GM12878 (cell line): ENCODE measurements at regions of chr7 and their contacts with region 1.

Region 1: GRCh38 chr7:23597094-23598091 is at the start of gene CCDC126:
- DNase-seq: peak; percentile 57
- ATAC-seq: peak; percentile 77
- H3K4me3 ChIP-seq: peak within 1 kb of the TSS; percentile 76
- H3K27ac ChIP-seq: peak within 1 kb of the TSS; percentile 92
- H3K4me1 ChIP-seq: peaks cover 32% of the 10 kb centered on the region
- H3K27me3 ChIP-seq: no peaks in the 10 kb centered on the region
- CTCF ChIP-seq: no peak
- EP300 ChIP-seq: no peak
- POLR2A ChIP-seq: peak; percentile 74
- RAD21 ChIP-seq: no peak
- polyA plus RNA-seq, gene CCDC126: 34.3 to 49.9 TPM

Region 2: DNA sequence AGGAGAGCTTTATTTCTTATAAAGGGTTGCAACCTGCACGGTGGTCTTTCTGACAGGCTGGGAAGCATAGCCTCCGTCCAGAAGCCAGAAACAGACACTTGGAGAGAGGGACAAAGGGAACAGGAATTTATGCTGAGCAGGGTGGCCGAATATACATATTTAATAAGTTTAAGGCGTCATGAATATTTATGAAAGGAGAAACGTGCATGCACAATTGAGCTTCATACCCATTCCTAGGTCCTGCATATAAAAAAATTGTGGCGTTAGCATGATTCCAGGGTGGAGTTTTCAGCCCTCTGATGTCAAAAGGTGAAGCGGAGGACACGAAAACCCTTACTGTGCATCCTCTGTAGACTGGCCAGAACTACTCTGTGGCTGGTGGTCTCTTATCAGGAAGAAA is 10.5 kb after region 1 on chr7:
- CTCF ChIA-PET with region 1: interaction called, 3 read pairs
- POLR2A ChIA-PET with region 1: interaction called, 4 read pairs
- RAD21 ChIA-PET with region 1: interaction called, 3 read pairs
- SMC1A ChIA-PET with region 1: interaction called, 10 read pairs
- in situ Hi-C with region 1: no loop called
- intact Hi-C with region 1: no loop called
- DNase-seq: no peak
- ATAC-seq: no peak
- H3K4me3 ChIP-seq: no peak overlapping the region
- H3K27ac ChIP-seq: no peak overlapping the region
- H3K4me1 ChIP-seq: peaks cover 9% of the 10 kb centered on the region; the same call in 1 of the 2 replicates
- H3K27me3 ChIP-seq: no peaks in the 10 kb centered on the region
- CTCF ChIP-seq: no peak
- EP300 ChIP-seq: no peak
- POLR2A ChIP-seq: no peak
- RAD21 ChIP-seq: no peak

Region 3: GRCh38 chr7:23679898-23680413 is 82.6 kb after region 1 on chr7 and contains the start of gene FAM221A:
- CTCF ChIA-PET with region 1: interaction called, 5 read pairs
- POLR2A ChIA-PET with region 1: interaction called, 4 read pairs
- RAD21 ChIA-PET with region 1: interaction called, 6 read pairs
- SMC1A ChIA-PET with region 1: interaction called, 21 read pairs
- in situ Hi-C with region 1: no loop called
- intact Hi-C with region 1: loop called (anchors 2 kb)
- DNase-seq: peak; percentile 36
- ATAC-seq: peak; percentile 98
- H3K4me3 ChIP-seq: peak within 1 kb of the TSS; percentile 84
- H3K27ac ChIP-seq: peak within 1 kb of the TSS; percentile 22
- H3K4me1 ChIP-seq: no peaks in the 10 kb centered on the region; the same call in 1 of the 2 replicates
- H3K27me3 ChIP-seq: no peaks in the 10 kb centered on the region
- CTCF ChIP-seq: peak; percentile 65 to 85 (median 70)
- EP300 ChIP-seq: no peak
- POLR2A ChIP-seq: peak; percentile 58
- RAD21 ChIP-seq: no peak
- polyA plus RNA-seq, gene FAM221A: 9.8 to 16.7 TPM

Region 4: DNA sequence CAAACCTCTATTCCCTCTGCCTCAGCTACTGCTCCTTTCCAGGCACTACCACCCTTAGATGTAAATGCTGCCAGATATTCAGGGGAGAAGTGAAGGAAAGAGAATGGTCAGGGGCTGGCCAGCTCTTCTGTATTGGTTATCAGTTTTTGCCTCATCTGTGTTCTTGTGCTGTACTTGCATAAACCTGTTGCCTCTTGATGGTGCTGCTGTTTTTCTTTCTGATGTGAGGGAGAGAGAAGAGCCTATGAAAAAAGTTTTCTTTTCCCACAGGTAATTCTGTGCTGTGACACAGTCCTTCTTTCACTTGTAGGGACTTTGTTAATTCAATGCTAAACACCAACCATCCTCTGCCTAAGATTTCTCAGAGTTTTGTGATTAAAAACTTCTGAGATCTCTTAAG is 170.1 kb after region 1 on chr7:
- CTCF ChIA-PET with region 1: no interaction called
- POLR2A ChIA-PET with region 1: no interaction called
- RAD21 ChIA-PET with region 1: no interaction called
- SMC1A ChIA-PET with region 1: no interaction called
- in situ Hi-C with region 1: no loop called
- intact Hi-C with region 1: no loop called
- DNase-seq: no peak
- ATAC-seq: no peak
- H3K4me3 ChIP-seq: no peak overlapping the region
- H3K27ac ChIP-seq: no peak overlapping the region
- H3K4me1 ChIP-seq: no peaks in the 10 kb centered on the region
- H3K27me3 ChIP-seq: no peaks in the 10 kb centered on the region
- CTCF ChIP-seq: no peak
- EP300 ChIP-seq: no peak
- POLR2A ChIP-seq: no peak
- RAD21 ChIP-seq: no peak

Region 5: DNA sequence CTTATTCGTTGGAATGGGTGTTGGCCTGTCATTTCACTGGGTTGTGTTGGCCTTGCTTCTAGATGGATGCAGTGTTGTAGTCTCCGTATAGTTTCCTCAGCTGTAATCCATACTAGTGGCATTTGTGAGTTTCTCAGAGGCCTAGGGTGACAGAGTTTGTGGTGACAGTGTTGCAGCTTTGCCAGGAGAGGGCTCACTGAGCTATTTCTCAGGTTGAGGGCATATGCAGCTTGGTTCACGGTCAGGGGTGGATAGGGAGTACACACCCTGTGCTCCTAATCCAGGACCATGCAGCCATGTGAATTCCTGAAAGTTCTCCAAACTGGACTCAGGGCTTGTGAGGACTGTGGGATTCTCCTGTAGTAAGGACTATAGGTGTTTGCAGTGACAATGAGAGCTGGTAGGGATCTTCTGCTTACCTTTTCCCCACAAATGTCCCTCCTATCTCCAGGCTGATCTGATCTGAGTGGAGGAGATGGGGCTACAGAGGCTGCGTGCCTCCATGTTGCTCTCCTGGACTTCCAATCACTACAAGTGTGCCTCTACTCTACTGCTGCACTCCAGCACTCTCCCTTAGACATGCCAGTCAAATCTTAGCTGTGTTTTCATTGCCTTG is 341.7 kb after region 1 on chr7:
- CTCF ChIA-PET with region 1: no interaction called
- POLR2A ChIA-PET with region 1: no interaction called
- RAD21 ChIA-PET with region 1: no interaction called
- SMC1A ChIA-PET with region 1: no interaction called
- in situ Hi-C with region 1: no loop called
- intact Hi-C with region 1: no loop called
- DNase-seq: no peak
- ATAC-seq: peak; percentile 94
- H3K4me3 ChIP-seq: no peak overlapping the region
- H3K27ac ChIP-seq: no peak overlapping the region
- H3K4me1 ChIP-seq: no peaks in the 10 kb centered on the region
- H3K27me3 ChIP-seq: no peaks in the 10 kb centered on the region
- CTCF ChIP-seq: peak; percentile 51 to 60 (median 58); a peak in 5 of 6 replicates
- EP300 ChIP-seq: no peak
- POLR2A ChIP-seq: no peak
- RAD21 ChIP-seq: peak; percentile 62